ENCODE measurements at regions of chr7 and their contacts with region 1.

Region 1: GRCh38 chr7:140326116-140326928 is 72.0 kb downstream of the SLC37A3 start:
- DNase-seq: peak; percentile 67 to 79
- ATAC-seq: peak; percentile 95
- H3K4me3 ChIP-seq: no peak overlapping the region
- H3K27ac ChIP-seq: 0 out of 6 replicates have a peak overlapping the region, but pooled peaks of 1 of the 2 experiments have one; percentile 52
- H3K4me1 ChIP-seq: no peaks in the 10 kb centered on the region
- CTCF ChIP-seq: peak; percentile 90
- EP300 ChIP-seq: no peak
- POLR2A ChIP-seq: no peak
- RAD21 ChIP-seq: peak; percentile 95 to 96

Region 2: DNA sequence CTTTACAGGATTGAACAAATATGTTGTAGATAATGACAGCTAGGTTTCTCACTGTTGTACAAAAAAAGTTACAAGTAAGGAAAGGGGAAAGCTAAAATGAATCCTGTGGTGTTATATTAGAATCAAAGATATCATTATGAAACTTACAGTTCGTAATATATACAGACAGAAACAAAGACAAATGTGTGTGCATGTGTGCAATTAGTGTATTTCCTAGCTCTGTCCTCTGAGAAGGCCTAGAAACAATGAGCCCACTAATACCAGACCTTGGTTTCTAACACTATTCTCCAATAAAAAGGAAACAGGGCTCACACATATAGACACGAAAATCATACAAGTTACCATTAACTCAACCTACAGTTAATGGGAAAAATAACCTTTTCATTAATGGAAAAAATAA is 157.5 kb before region 1 on chr7:
- CTCF ChIA-PET with region 1: interaction called, 55 read pairs
- POLR2A ChIA-PET with region 1: interaction called, 3 read pairs
- DNase-seq: no peak
- ATAC-seq: no peak
- H3K4me3 ChIP-seq: no peak overlapping the region
- H3K27ac ChIP-seq: no peak overlapping the region
- H3K4me1 ChIP-seq: peaks cover 37% of the 10 kb centered on the region
- CTCF ChIP-seq: no peak
- EP300 ChIP-seq: no peak
- POLR2A ChIP-seq: no peak
- RAD21 ChIP-seq: no peak

Region 3: DNA sequence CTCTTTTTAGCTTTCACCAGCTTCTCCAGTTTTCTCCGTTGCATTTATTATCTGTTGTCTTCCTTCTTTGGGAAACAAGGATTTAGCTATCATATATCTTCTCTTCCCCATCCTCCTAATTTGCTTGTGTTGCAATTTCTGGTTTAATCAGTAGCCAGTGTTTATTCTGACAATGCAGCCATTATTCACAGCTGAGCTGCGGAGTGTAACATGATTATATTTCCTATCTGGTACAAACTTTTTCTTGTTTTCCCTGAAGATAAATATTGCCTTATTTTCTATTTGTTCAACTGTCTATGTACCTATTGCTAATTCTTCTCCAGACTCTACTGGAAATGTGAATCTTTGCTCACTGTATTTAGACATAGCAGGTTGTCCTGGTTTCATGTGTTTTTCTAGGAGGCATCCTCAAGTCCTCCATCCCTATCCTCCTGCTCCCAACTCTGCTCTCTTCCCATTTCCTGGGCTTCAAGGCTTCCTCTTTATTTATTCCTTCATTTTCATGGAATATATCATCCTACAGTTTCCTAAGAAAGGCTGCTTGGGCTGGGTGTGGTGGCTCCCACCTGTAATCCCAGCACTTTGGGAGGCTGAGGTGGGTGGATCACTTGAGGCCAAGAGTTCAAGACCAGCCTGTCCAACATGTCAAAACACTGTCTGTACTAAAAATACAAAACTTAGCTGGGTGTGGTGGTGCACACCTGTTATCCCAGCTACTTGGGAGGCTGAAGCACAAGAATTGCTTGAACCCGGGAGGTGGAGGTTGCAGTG is 77.1 kb before region 1 on chr7:
- CTCF ChIA-PET with region 1: interaction called, 14 read pairs
- POLR2A ChIA-PET with region 1: no interaction called
- DNase-seq: peak in 1 of 2 experiments; percentile 56
- ATAC-seq: peak in 1 of 2 experiments; percentile 79; a peak in 3 of 6 replicates
- H3K4me3 ChIP-seq: no peak overlapping the region
- H3K27ac ChIP-seq: peak overlapping the region; percentile 48 to 65
- H3K4me1 ChIP-seq: peaks cover 22% of the 10 kb centered on the region
- CTCF ChIP-seq: no peak
- EP300 ChIP-seq: no peak
- POLR2A ChIP-seq: no peak
- RAD21 ChIP-seq: no peak

Region 4: DNA sequence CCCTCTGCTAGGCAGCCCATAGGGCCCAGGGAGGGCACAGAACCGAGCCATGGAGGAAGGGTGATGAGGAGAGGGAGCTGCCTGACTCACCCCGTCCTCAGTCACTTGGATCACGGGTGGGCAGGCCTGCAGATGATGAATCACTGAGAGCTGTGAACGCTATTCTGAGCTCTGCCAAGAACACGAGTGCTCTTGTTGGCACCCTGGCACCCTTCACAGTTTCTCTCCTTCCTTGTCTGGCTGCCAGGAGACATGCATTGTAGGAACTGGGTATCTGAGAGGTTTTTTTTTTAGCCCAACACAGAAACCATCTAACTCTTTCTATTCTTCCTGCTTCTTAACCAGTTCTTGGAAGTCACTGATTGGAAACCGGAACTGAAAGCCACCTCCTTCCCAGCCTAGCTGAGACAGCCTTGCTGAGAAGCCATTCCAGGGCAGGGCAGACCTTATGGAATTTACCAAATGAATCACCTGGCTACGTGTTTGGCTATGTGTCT is 10.1 kb before region 1 on chr7:
- CTCF ChIA-PET with region 1: interaction called, 33 read pairs
- POLR2A ChIA-PET with region 1: no interaction called
- DNase-seq: peak; percentile 44 to 79
- ATAC-seq: peak; percentile 92 to 95
- H3K4me3 ChIP-seq: no peak overlapping the region
- H3K27ac ChIP-seq: peak overlapping the region; percentile 71 to 83
- H3K4me1 ChIP-seq: peaks cover 39% of the 10 kb centered on the region
- CTCF ChIP-seq: no peak
- EP300 ChIP-seq: no peak
- POLR2A ChIP-seq: no peak
- RAD21 ChIP-seq: no peak

Region 5: GRCh38 chr7:140435252-140435895 is 109.1 kb after region 1 on chr7:
- CTCF ChIA-PET with region 1: no interaction called
- POLR2A ChIA-PET with region 1: no interaction called
- DNase-seq: no peak
- ATAC-seq: no peak
- H3K4me3 ChIP-seq: no peak overlapping the region
- H3K27ac ChIP-seq: no peak overlapping the region
- H3K4me1 ChIP-seq: no peaks in the 10 kb centered on the region
- CTCF ChIP-seq: no peak
- EP300 ChIP-seq: no peak
- POLR2A ChIP-seq: no peak
- RAD21 ChIP-seq: no peak

Region 6: DNA sequence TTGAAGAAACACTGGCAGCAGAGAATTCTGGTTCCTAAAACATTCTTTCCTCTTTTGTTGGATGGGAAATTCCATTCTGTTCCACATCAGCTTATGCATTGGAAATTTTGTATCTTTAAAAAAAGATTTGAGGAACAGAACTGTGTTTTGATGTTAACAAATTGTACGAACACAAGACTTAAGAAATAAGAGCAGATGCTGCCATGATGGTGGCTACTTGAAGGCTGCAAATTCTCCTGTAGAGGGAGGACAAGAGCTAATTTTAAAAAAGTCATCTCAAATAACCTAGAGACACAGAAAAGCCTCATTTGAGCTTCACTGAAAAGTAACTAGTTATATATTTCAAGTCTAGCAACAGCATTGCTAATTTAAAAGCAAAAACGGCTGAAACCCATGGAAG is 400.0 kb after region 1 on chr7:
- CTCF ChIA-PET with region 1: no interaction called
- POLR2A ChIA-PET with region 1: no interaction called
- DNase-seq: peak; percentile 18 to 38
- ATAC-seq: peak in 1 of 2 experiments; percentile 74; a peak in 2 of 6 replicates
- H3K4me3 ChIP-seq: no peak overlapping the region
- H3K27ac ChIP-seq: no peak overlapping the region
- H3K4me1 ChIP-seq: no peaks in the 10 kb centered on the region
- CTCF ChIP-seq: peak; percentile 40; the same call in 2 of the 3 replicates
- EP300 ChIP-seq: no peak
- POLR2A ChIP-seq: no peak
- RAD21 ChIP-seq: peak; percentile 39 to 57; a peak in 4 of 5 replicates

Region 7: GRCh38 chr7:141208539-141208938 is 882.2 kb after region 1 on chr7:
- CTCF ChIA-PET with region 1: no interaction called
- POLR2A ChIA-PET with region 1: no interaction called
- DNase-seq: no peak
- ATAC-seq: no peak
- H3K4me3 ChIP-seq: no peak overlapping the region
- H3K27ac ChIP-seq: no peak overlapping the region
- H3K4me1 ChIP-seq: no peaks in the 10 kb centered on the region
- CTCF ChIP-seq: no peak
- EP300 ChIP-seq: no peak
- POLR2A ChIP-seq: no peak
- RAD21 ChIP-seq: no peak

Measured in A549 (cell line).